Gastrocnemius medialis (tissue), 4 donors: ENCODE measurements at regions of chr2 and their contacts with region 1.

Region 1: DNA sequence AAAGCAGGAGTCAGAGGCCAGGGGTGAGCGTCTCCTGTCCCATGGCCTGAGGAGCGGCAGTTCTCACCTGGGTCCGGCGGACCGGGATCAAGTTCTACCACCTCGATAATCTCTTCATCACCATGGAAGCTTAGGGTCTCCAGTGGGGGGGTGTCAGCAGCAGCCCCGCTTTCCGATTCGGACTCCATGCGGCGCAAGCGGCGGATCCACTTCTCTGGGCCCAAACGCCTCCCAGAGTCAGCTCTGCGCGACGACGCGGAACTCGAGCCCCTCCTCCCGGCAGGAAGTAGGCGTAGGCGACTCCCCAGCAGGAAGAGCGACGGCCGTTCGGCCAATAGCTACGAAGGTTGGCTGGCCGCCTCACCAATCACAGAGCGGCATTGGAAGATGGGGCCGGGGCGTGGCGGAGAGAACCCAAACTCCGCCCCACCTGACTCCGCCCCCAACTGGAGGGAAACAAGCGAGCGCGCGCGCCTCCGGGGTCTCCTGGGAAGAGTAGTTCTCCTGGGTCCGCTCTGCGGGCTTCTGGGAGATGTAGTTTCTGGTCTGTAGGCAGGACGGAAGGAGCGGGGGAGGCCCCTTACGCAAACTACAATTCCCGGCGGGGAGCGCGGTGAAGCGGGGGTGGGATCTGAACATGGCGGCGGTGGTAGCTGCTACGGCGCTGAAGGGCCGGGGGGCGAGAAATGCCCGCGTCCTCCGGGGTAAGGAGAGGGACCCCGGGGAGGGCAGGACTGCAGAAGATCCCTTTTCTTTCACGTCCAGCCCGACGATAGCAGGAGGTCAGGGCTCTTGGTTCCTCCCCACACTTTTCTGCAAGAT is at the starts of genes AAMP and PNKD:
- DNase-seq: peak; percentile 99 to 100
- ATAC-seq: peak; percentile 88 to 89
- H3K4me3 ChIP-seq: peak within 1 kb of the TSS; percentile 88 to 97 (median 90)
- H3K27ac ChIP-seq: peak within 1 kb of the TSS; percentile 86 to 94 (median 90)
- H3K4me1 ChIP-seq: peaks cover 38 to 51% of the 10 kb centered on the region in 2 donors
- H3K27me3 ChIP-seq: no peaks in the 10 kb centered on the region
- CTCF ChIP-seq: peak in 3 of 5 experiments; percentile 10 to 18 (median 10)
- POLR2A ChIP-seq: peak; percentile 89 to 91
- total RNA-seq, gene AAMP: 87.1 to 134 (median 96.0) TPM
- total RNA-seq, gene PNKD: 20.1 to 35.8 (median 31.9) TPM

Region 2: GRCh38 chr2:218186355-218186766 is 83.7 kb before region 1 on chr2:
- in situ Hi-C with region 1: loop called in 1 of 4 experiments (anchors 10 kb)
- intact Hi-C with region 1: loop called (anchors 5 kb)
- DNase-seq: peak; percentile 22 to 69
- ATAC-seq: peak; percentile 94 to 98
- H3K4me3 ChIP-seq: no peak overlapping the region
- H3K27ac ChIP-seq: peak overlapping the region in 3 of 4 donors; percentile 8 to 58 (median 10)
- H3K4me1 ChIP-seq: peaks cover 11 to 14% of the 10 kb centered on the region in 2 donors
- H3K27me3 ChIP-seq: no peaks in the 10 kb centered on the region
- CTCF ChIP-seq: peak; percentile 67 to 87 (median 83)
- POLR2A ChIP-seq: no peak

Region 3: DNA sequence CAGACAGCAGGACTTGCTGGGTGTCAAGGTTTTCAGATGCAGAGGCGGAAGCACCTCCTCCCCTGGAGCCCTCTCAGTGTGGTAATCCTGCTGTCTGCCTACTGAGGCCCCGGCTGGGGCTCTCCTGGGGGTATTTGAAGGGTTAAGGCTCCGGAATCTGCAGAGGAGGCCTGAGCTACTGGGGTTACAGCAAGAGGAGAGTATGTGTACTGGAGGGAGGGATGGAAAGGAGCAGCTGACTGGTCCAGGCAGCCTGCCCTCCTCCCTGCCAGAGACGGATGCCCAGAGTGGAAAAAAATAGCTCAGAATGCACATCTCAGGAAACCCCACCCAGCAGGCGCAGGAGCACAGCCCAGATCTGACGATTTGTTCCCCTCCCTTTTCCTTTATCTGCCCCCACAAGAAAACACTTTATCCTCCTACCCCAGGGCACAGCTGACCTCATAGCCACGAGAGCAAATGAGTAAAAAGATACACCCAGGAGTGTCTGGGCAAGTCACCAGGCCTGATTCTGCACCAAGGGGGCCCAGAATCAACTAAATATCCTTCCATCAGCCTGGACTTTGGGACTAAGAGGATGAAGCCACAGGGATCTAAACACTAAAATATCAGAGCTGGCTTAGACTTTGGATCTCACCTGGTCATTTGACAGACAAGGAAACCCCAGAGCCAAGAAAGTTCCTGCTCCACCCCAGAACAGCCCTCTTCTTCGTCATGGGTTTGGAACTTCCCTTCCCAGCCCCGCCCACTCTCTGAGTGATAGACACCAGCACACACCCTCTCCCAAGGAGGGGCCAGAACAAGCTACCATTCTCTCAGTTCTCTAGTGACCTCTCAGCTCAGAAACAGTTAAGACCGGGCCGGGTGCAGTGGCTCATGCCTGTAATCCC is 16.7 kb after region 1 on chr2:
- in situ Hi-C with region 1: no loop called
- intact Hi-C with region 1: loop called (anchors 2 kb)
- DNase-seq: peak; percentile 92 to 96
- ATAC-seq: peak; percentile 66 to 70
- H3K4me3 ChIP-seq: peak overlapping the region; percentile 59 to 70 (median 61)
- H3K27ac ChIP-seq: peak overlapping the region; percentile 93 to 100 (median 98)
- H3K4me1 ChIP-seq: peaks cover 92 to 97% of the 10 kb centered on the region in 2 donors
- H3K27me3 ChIP-seq: no peaks in the 10 kb centered on the region
- CTCF ChIP-seq: no peak
- POLR2A ChIP-seq: peak; percentile 66 to 69

Region 4: GRCh38 chr2:218360447-218360846 is 90.3 kb after region 1 on chr2:
- in situ Hi-C with region 1: no loop called
- intact Hi-C with region 1: loop called (anchors 1 kb)
- DNase-seq: peak in 1 of 2 donors; percentile 19
- ATAC-seq: no peak
- H3K4me3 ChIP-seq: no peak overlapping the region
- H3K27ac ChIP-seq: no peak overlapping the region
- H3K4me1 ChIP-seq: no peaks in the 10 kb centered on the region
- H3K27me3 ChIP-seq: no peaks in the 10 kb centered on the region
- CTCF ChIP-seq: no peak
- POLR2A ChIP-seq: no peak

Region 5: DNA sequence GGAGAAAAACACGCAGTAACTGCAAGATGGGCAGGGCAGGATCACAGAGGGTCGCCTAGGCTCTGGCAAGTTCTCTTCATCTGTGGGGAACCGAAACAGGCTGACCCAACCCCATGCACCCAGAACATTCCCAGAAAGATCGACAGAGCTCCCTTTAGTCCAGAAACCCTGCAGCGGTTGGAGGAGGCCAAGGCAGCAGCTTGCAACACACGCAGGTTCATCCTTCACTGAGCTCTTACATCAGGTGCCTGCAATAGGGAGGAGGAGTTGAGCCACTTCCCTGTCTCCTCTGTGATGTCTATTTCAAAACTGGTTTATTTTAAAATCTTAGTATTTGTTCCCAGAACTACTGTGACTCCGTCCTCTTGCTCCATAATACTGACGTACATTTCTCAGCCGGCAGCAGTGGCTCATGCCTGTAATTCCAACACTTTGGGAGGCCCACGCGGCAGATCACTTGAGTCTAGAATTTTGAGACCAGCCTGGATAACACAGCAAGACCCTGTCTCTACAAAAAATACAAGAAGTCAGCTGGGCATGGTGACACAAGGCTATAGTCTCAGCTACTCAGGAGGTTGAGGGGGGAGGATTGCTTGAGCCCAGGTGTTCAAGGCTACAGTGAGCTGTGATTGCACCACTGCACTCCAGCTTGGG is 100.4 kb after region 1 on chr2:
- in situ Hi-C with region 1: no loop called
- intact Hi-C with region 1: no loop called
- DNase-seq: peak in 1 of 2 donors; percentile 62
- ATAC-seq: peak; percentile 33 to 39
- H3K4me3 ChIP-seq: no peak overlapping the region
- H3K27ac ChIP-seq: peak overlapping the region; percentile 62 to 87 (median 77)
- H3K4me1 ChIP-seq: peaks cover 0 to 5% of the 10 kb centered on the region in 2 donors
- H3K27me3 ChIP-seq: no peaks in the 10 kb centered on the region
- CTCF ChIP-seq: no peak
- POLR2A ChIP-seq: peak in 1 of 2 donors; percentile 23